HepG2 (cell line): ENCODE measurements at regions of chr22 and their contacts with region 1.

Region 1: GRCh38 chr22:30206951-30207359 is 39.6 kb downstream of the LIF start:
- DNase-seq: peak; percentile 85
- ATAC-seq: peak; percentile 77
- H3K4me3 ChIP-seq: no peak overlapping the region
- H3K27ac ChIP-seq: no peak overlapping the region
- H3K4me1 ChIP-seq: peaks cover 69% of the 10 kb centered on the region
- H3K27me3 ChIP-seq: no peaks in the 10 kb centered on the region
- CTCF ChIP-seq: no peak
- EP300 ChIP-seq: peak; percentile 57 to 64; a peak in 3 of 4 replicates
- POLR2A ChIP-seq: no peak
- RAD21 ChIP-seq: no peak

Region 2: DNA sequence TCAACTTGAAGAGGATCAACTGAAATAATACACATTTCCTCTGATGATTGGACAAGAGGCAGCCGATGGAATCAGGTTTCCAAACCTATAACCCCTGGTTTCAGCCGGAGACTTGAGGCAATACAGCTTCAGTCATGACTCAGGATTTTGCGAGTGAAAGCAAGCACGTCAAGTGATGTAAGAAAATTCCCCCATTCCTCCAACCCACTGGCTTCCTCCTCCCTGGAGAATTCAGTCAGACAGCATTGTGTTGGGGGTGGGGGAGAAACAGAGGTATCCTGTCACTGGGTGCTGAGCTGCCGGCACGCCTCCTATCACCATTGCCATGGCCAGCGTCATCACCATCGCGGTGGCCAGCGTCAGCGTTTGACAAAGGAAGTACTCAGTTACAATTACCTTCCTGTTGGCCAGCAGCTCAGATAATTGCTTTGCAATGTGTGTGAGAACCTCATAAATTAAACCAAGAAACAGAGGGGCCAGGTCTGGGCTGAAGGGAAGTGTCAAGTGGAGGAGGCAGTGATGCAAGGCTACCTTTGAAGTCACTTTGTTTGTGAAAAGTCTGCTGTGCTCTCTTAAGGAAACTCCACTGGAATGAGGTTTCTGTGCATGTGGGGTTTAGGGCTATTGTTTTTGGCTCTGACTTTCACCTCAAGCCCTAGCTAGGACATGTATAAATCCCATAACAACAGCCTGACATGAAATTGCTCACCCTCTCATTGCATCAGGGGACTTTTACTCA is 10.6 kb before region 1 on chr22:
- CTCF ChIA-PET with region 1: no interaction called
- POLR2A ChIA-PET with region 1: interaction called, 32 read pairs
- in situ Hi-C with region 1: no loop called
- intact Hi-C with region 1: no loop called
- DNase-seq: peak; percentile 84
- ATAC-seq: peak; percentile 84
- H3K4me3 ChIP-seq: peak overlapping the region in 2 of 3 experiments; percentile 12 to 38; a peak in 4 of 6 replicates
- H3K27ac ChIP-seq: peak overlapping the region; percentile 64
- H3K4me1 ChIP-seq: peaks cover 64% of the 10 kb centered on the region
- H3K27me3 ChIP-seq: no peaks in the 10 kb centered on the region; a peak in 1 of 5 replicates
- CTCF ChIP-seq: no peak
- EP300 ChIP-seq: peak in 1 of 2 experiments; percentile 1; a peak in 2 of 4 replicates
- POLR2A ChIP-seq: 0 out of 4 replicates have a peak, but pooled peaks of 1 of the 2 experiments have one; percentile 15
- RAD21 ChIP-seq: no peak

Region 3: GRCh38 chr22:30253205-30253852 is 46.4 kb after region 1 on chr22:
- CTCF ChIA-PET with region 1: interaction called, 3 read pairs
- POLR2A ChIA-PET with region 1: interaction called, 7 read pairs
- in situ Hi-C with region 1: no loop called
- intact Hi-C with region 1: loop called (anchors 1 kb)
- DNase-seq: no peak
- ATAC-seq: no peak
- H3K4me3 ChIP-seq: no peak overlapping the region
- H3K27ac ChIP-seq: no peak overlapping the region
- H3K4me1 ChIP-seq: peaks cover 67% of the 10 kb centered on the region
- H3K27me3 ChIP-seq: peaks cover 0 to 8% of the 10 kb centered on the region in 2 experiments; a peak in 2 of 5 replicates
- CTCF ChIP-seq: no peak
- EP300 ChIP-seq: no peak
- POLR2A ChIP-seq: no peak
- RAD21 ChIP-seq: no peak